B cell (primary cell): ENCODE measurements at regions of chr5 and their contacts with region 1.

Region 1: DNA sequence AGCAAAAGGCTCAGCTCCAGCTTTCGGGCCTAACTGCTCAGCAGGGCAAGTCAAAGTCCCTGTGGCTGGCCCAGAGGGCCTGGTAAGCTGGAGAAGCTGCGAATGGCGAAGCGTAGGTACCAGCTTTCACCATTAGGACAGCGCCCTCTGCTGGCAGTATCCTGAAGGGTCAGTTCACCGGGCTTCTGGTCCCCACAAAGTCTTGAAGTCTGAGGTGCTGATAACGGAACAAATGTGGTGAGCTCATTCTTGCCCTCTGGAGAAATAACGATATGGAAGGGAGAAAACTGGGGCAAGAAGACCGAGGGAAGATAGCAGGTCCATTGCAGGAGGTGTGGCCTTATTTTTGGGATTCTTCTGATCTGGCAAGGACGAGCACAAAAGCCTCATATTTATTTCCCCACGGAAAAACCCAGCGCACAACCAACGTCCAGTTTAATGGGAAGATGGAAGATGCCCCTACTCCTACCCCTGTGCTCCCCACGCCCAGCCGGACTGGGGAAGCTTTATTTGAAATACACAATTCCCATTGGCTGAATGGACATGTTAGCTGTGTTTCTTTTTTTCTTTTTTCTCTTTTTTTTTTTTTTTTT is 7.2 kb downstream of the SOWAHA start:
- DNase-seq: peak; percentile 89
- ATAC-seq: peak; percentile 89
- H3K4me3 ChIP-seq: peak overlapping the region in 3 of 5 experiments; percentile 23 to 39 (median 28)
- H3K4me3 Mint-ChIP-seq: peak overlapping the region; percentile 55
- H3K27ac ChIP-seq: no peak overlapping the region
- H3K27ac Mint-ChIP-seq: no peak overlapping the region
- H3K4me1 ChIP-seq: peaks cover 27% of the 10 kb centered on the region in 2 donors
- H3K4me1 Mint-ChIP-seq: peaks cover 13% of the 10 kb centered on the region
- H3K27me3 ChIP-seq: peaks cover 0 to 54% (median 25%) of the 10 kb centered on the region in 4 experiments
- H3K27me3 Mint-ChIP-seq: peaks cover 21% of the 10 kb centered on the region
- CTCF ChIP-seq: peak; percentile 88

Region 2: DNA sequence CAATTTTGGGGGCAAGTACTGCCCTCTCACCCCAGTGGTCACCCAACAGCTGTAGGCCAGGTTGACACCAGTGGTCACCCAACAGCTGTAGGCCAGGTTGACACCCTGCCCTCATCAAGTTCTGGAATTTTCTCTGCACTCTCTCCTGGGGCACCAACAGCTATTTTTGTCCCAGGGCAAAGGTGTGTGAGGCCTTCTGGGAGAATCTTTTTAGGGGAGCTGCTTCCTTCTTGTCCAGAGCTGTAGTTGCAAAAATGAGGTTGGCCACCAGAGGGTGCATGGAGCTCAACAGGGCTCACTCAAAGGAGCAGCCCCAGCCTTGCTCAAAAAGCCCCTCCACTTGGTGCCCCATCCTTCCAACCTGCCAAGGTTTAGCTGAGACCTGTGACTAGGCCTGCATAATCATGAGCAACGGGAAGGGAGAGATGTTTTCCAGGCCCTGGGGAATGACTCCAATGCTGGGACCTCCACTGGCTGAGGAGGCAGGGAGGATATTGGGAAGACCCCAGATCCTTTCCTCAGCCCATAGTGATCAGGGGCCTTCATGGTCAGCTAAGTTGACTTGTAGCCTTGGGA is 582.0 kb before region 1 on chr5:
- CTCF ChIA-PET with region 1: interaction called, 16 read pairs
- POLR2A ChIA-PET with region 1: no interaction called
- intact Hi-C with region 1: no loop called
- DNase-seq: peak; percentile 78
- ATAC-seq: peak; percentile 80
- H3K4me3 ChIP-seq: no peak overlapping the region
- H3K4me3 Mint-ChIP-seq: no peak overlapping the region
- H3K27ac ChIP-seq: no peak overlapping the region
- H3K27ac Mint-ChIP-seq: no peak overlapping the region
- H3K4me1 ChIP-seq: no peaks in the 10 kb centered on the region
- H3K4me1 Mint-ChIP-seq: no peaks in the 10 kb centered on the region
- H3K27me3 ChIP-seq: no peaks in the 10 kb centered on the region
- H3K27me3 Mint-ChIP-seq: peaks cover 4% of the 10 kb centered on the region
- CTCF ChIP-seq: peak; percentile 89

Region 3: GRCh38 chr5:132506094-132506692 is 314.1 kb before region 1 on chr5:
- CTCF ChIA-PET with region 1: interaction called, 66 read pairs
- POLR2A ChIA-PET with region 1: no interaction called
- intact Hi-C with region 1: loop called (anchors 1 kb)
- DNase-seq: peak; percentile 43
- ATAC-seq: no peak
- H3K4me3 ChIP-seq: no peak overlapping the region
- H3K4me3 Mint-ChIP-seq: no peak overlapping the region
- H3K27ac ChIP-seq: no peak overlapping the region
- H3K27ac Mint-ChIP-seq: no peak overlapping the region
- H3K4me1 ChIP-seq: peaks cover 7% of the 10 kb centered on the region in 2 donors
- H3K4me1 Mint-ChIP-seq: peaks cover 8% of the 10 kb centered on the region
- H3K27me3 ChIP-seq: peaks cover 0 to 2% (median 0%) of the 10 kb centered on the region in 4 experiments
- H3K27me3 Mint-ChIP-seq: peaks cover 4% of the 10 kb centered on the region
- CTCF ChIP-seq: peak; percentile 27

Region 4: DNA sequence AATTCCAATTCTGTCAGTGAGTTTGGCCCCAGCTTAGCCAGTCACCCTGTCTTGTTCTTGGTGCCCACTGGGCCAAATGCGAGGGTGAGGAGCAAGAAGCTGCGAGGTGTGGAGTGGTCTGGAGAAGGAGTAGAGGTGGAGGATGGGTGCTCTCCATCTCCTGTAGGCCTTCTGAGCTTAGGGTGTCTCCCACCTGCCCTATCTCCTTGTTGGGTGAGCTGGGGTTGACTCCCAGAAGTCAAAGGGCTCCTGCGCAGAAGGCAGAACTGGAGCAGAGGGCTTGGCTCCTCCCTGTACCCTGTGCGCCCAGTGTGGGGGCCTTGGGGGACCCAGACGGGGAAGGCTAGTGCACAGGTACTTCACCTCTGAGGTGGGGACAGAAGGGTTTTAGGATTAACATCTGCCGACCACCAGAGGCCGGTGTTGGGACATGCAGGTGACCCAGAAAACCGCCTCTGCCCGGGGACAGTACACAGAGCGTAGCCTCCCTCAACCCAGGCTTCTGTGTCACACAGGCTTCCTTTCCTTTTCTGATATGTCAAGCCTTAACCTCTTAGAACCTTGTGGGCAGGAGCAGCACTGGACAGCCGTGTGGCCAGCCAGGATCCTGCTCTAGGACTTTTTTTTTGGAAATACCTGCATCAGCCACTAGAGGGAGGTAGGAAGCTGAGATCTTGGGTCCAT is 293.8 kb before region 1 on chr5:
- CTCF ChIA-PET with region 1: interaction called, 32 read pairs
- POLR2A ChIA-PET with region 1: no interaction called
- intact Hi-C with region 1: loop called (anchors 1 kb)
- DNase-seq: peak; percentile 71
- ATAC-seq: peak; percentile 53
- H3K4me3 ChIP-seq: no peak overlapping the region
- H3K4me3 Mint-ChIP-seq: peak overlapping the region; percentile 8
- H3K27ac ChIP-seq: no peak overlapping the region
- H3K27ac Mint-ChIP-seq: no peak overlapping the region
- H3K4me1 ChIP-seq: peaks cover 41 to 45% of the 10 kb centered on the region in 2 donors
- H3K4me1 Mint-ChIP-seq: peaks cover 49% of the 10 kb centered on the region
- H3K27me3 ChIP-seq: no peaks in the 10 kb centered on the region
- H3K27me3 Mint-ChIP-seq: no peaks in the 10 kb centered on the region
- CTCF ChIP-seq: peak; percentile 89

Region 5: DNA sequence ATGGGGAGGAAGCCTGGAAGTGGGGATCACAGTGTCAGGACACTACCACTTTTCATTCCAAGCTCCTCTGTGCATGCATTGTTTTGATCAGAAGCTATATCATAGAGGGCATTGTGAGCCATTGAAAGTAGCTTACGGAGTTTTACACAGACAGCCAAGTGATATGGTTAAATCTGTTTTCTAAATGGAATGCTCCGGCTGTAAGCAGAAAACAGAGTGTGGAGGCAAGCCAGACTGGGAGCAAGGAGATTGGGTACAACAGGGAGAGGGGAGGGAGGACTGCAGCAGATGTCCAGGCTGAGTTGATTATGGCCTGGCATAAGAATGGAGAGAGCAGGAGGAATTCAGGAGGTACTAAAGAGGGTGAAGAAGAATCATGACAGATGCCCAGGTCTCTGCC is 22.6 kb before region 1 on chr5:
- CTCF ChIA-PET with region 1: interaction called, 15 read pairs
- POLR2A ChIA-PET with region 1: no interaction called
- intact Hi-C with region 1: no loop called
- DNase-seq: no peak
- ATAC-seq: no peak
- H3K4me3 ChIP-seq: no peak overlapping the region
- H3K4me3 Mint-ChIP-seq: no peak overlapping the region
- H3K27ac ChIP-seq: no peak overlapping the region
- H3K27ac Mint-ChIP-seq: no peak overlapping the region
- H3K4me1 ChIP-seq: no peaks in the 10 kb centered on the region
- H3K4me1 Mint-ChIP-seq: no peaks in the 10 kb centered on the region
- H3K27me3 ChIP-seq: peaks cover 0 to 16% (median 12%) of the 10 kb centered on the region in 4 experiments
- H3K27me3 Mint-ChIP-seq: peaks cover 52% of the 10 kb centered on the region
- CTCF ChIP-seq: no peak

Region 6: GRCh38 chr5:132883261-132883834 is 63.1 kb after region 1 on chr5:
- CTCF ChIA-PET with region 1: interaction called, 5 read pairs
- POLR2A ChIA-PET with region 1: interaction called, 11 read pairs
- intact Hi-C with region 1: no loop called
- DNase-seq: peak; percentile 69
- ATAC-seq: peak; percentile 53
- H3K4me3 ChIP-seq: no peak overlapping the region
- H3K4me3 Mint-ChIP-seq: no peak overlapping the region
- H3K27ac ChIP-seq: no peak overlapping the region
- H3K27ac Mint-ChIP-seq: no peak overlapping the region
- H3K4me1 ChIP-seq: no peaks in the 10 kb centered on the region
- H3K4me1 Mint-ChIP-seq: peaks cover 8% of the 10 kb centered on the region
- H3K27me3 ChIP-seq: no peaks in the 10 kb centered on the region
- H3K27me3 Mint-ChIP-seq: no peaks in the 10 kb centered on the region
- CTCF ChIP-seq: peak; percentile 78